Transverse colon (tissue), 4 donors: ENCODE measurements at regions of chr7 and their contacts with region 1.

Region 1: GRCh38 chr7:19161671-19162070 is 16.4 kb upstream of the FERD3L start:
- DNase-seq: no peak
- H3K4me3 ChIP-seq: no peak overlapping the region
- H3K27ac ChIP-seq: no peak overlapping the region
- H3K4me1 ChIP-seq: no peaks in the 10 kb centered on the region
- H3K27me3 ChIP-seq: no peaks in the 10 kb centered on the region
- CTCF ChIP-seq: no peak
- EP300 ChIP-seq: no peak
- POLR2A ChIP-seq: no peak

Region 2: DNA sequence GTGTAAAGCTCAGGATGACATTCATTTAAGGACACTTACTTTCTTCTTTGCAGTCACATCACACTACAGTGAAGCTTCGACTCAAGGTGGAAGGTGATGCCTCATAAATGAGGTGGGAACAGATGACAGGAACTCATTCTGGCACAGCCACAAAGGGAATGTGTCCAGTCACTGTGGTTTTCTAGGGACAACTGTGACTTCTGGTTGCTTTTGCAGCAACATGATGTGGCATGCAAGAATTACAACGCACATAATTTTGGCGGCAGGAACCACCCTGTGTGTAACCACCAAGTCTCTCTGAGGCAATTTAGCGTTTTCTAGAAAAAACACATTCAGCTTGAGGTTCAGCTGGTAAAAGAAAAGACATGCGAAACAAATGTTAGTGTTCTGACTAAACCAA is 15.6 kb after region 1 on chr7:
- in situ Hi-C with region 1: no loop called
- intact Hi-C with region 1: loop called (anchors 1 kb)
- DNase-seq: no peak
- H3K4me3 ChIP-seq: no peak overlapping the region
- H3K27ac ChIP-seq: no peak overlapping the region
- H3K4me1 ChIP-seq: no peaks in the 10 kb centered on the region
- H3K27me3 ChIP-seq: no peaks in the 10 kb centered on the region
- CTCF ChIP-seq: no peak
- EP300 ChIP-seq: no peak
- POLR2A ChIP-seq: no peak